Common myeloid progenitor, CD34-positive (primary cell): ENCODE measurements at regions of chr12 and their contacts with region 1.

Region 1: GRCh38 chr12:46933947-46934346 is 108.2 kb upstream of the SLC38A4 start:
- DNase-seq: peak; percentile 38 to 62 (median 50)
- H3K4me3 ChIP-seq: no peak overlapping the region
- H3K27ac ChIP-seq: no peak overlapping the region
- H3K4me1 ChIP-seq: no peaks in the 10 kb centered on the region
- H3K27me3 ChIP-seq: no peaks in the 10 kb centered on the region

Region 2: GRCh38 chr12:46946137-46946536 is 12.2 kb after region 1 on chr12:
- CTCF ChIA-PET with region 1: interaction called, 10 read pairs
- POLR2A ChIA-PET with region 1: no interaction called
- DNase-seq: no peak
- H3K4me3 ChIP-seq: no peak overlapping the region
- H3K27ac ChIP-seq: no peak overlapping the region
- H3K4me1 ChIP-seq: peaks cover 0 to 4% (median 0%) of the 10 kb centered on the region in 4 experiments
- H3K27me3 ChIP-seq: no peaks in the 10 kb centered on the region